Right lobe of liver (tissue), 6 donors: ENCODE measurements at regions of chr12 and their contacts with region 1.

Region 1: DNA sequence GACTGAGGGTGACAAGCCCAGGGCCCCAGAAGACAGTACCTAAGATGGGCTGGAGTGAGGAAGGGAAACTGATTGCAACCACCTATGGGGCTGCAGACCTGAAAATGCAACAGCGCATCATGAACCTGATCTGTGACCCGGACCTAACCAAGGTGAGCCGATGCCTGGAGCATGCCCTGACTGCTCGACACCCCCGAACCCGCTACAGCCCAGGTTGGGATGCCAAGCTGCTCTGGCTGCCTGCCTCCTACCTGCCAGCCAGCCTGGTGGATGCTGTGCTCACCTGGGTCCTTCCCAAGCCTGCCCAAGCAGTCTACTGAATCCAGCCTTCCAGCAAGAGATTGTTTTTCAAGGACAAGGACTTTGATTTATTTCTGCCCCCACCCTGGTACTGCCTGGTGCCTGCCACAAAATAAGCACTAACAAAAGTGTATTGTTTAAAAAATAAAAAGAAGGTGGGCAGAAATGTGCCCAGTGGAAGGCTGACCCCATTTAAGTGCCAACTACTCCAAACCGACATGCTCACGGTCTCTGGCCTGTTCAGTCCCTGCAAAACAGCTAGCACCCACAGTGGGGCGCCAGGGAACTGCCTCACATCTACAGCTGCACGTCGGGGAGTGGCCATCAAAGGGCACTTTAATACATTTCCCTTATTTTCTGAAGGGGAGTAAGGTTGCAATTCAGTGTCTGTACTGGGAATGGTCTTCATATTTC is 4.2 kb downstream of the RDH5 start:
- DNase-seq: peak in 2 of 3 donors; percentile 69 to 76
- ATAC-seq: no peak
- H3K4me3 ChIP-seq: no peak overlapping the region
- H3K27ac ChIP-seq: no peak overlapping the region
- H3K4me1 ChIP-seq: peaks cover 0 to 51% (median 11%) of the 10 kb centered on the region in 4 donors
- H3K27me3 ChIP-seq: no peaks in the 10 kb centered on the region
- CTCF ChIP-seq: peak; percentile 51 to 61 (median 54)
- POLR2A ChIP-seq: no peak

Region 2: DNA sequence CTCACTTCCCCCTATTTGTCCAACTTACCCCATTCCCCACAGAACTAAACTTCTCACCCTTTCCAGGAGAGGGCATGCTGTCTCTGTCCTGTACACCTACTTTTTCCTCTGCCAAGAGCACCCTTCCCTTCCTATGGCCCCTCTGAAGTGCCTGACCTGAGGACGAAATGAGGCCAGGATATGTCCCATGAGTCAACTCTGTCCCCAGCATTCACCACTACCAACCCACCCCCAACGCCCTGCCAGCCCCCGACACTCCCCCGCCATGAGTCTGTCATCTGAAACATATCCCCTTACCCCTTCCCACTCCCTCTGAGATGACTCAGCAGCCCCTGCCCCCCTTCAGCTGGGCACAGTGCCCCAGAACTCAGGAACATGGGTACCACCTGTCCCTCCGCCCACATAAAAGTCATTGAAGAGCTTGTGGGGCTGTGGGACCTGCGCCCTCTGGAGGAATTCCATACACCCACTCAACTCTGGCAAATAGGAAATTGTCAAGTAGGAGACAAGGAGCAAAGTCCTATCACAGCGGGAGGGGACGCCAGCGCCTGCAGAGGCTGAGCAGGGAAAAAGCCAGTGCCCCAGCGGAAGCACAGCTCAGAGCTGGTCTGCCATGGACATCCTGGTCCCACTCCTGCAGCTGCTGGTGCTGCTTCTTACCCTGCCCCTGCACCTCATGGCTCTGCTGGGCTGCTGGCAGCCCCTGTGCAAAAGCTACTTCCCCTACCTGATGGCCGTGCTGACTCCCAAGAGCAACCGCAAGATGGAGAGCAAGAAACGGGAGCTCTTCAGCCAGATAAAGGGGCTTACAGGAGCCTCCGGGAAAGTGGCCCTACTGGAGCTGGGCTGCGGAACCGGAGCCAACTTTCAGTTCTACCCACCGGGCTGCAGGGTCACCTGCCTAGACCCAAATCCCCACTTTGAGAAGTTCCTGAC is 43.0 kb before region 1 on chr12:
- intact Hi-C with region 1: loop called in 1 of 2 experiments (anchors 5 kb)
- DNase-seq: peak; percentile 87 to 92 (median 92)
- ATAC-seq: peak; percentile 85 to 91 (median 89)
- H3K4me3 ChIP-seq: peak overlapping the region; percentile 71 to 78 (median 75)
- H3K27ac ChIP-seq: peak overlapping the region; percentile 20 to 76 (median 58)
- H3K4me1 ChIP-seq: peaks cover 0 to 7% (median 0%) of the 10 kb centered on the region in 4 donors
- H3K27me3 ChIP-seq: no peaks in the 10 kb centered on the region
- CTCF ChIP-seq: peak; percentile 20 to 50 (median 40)
- POLR2A ChIP-seq: peak; percentile 93

Region 3: GRCh38 chr12:55780685-55781084 is 56.3 kb after region 1 on chr12:
- intact Hi-C with region 1: no loop called
- DNase-seq: no peak
- ATAC-seq: no peak
- H3K4me3 ChIP-seq: no peak overlapping the region
- H3K27ac ChIP-seq: no peak overlapping the region
- H3K4me1 ChIP-seq: no peaks in the 10 kb centered on the region
- H3K27me3 ChIP-seq: no peaks in the 10 kb centered on the region
- CTCF ChIP-seq: no peak
- POLR2A ChIP-seq: no peak